Psoas muscle (tissue), 8 donors: ENCODE measurements at regions of chr7 and their contacts with region 1.

Region 1: GRCh38 chr7:10412422-10413019 is 561.2 kb upstream of the PHF14 start:
- DNase-seq: no peak
- ATAC-seq: no peak
- H3K4me3 ChIP-seq: no peak overlapping the region
- H3K27ac ChIP-seq: no peak overlapping the region
- H3K4me1 ChIP-seq: no peaks in the 10 kb centered on the region
- H3K27me3 ChIP-seq: no peaks in the 10 kb centered on the region
- CTCF ChIP-seq: peak; percentile 53

Region 2: GRCh38 chr7:8423057-8423456 is 1989.5 kb before region 1 on chr7:
- intact Hi-C with region 1: loop called in 1 of 2 experiments (anchors 10 kb)
- DNase-seq: no peak
- ATAC-seq: no peak
- H3K4me3 ChIP-seq: no peak overlapping the region
- H3K27ac ChIP-seq: no peak overlapping the region
- H3K4me1 ChIP-seq: no peaks in the 10 kb centered on the region
- H3K27me3 ChIP-seq: peaks cover 0 to 11% (median 0%) of the 10 kb centered on the region in 3 donors
- CTCF ChIP-seq: no peak

Region 3: DNA sequence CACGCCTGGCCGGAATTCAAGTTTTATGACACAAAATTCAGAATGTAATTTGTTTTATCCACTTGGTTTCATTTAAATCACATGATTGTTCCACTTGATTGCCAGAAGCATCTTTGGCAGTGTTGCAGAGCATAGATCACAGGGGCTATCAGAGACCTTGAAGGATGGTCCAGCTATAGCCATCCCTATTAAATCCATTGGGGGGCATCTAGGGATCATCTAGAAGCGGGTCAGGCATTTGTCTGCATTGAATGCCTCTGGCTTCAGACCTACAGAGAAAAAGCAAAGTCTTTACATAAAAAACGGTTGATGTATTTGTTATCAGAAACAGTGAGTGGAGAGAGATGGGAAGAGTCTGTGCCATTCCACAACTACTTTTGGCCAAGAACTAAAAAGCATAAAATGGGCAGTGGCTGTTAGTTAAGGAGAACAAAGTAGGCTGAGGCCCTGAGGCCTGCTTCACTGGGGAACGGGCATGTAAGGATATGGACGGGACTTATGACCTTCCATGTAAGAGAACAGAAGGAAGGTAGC is 1832.8 kb before region 1 on chr7:
- intact Hi-C with region 1: loop called in 1 of 2 experiments (anchors 5 kb)
- DNase-seq: no peak
- ATAC-seq: no peak
- H3K4me3 ChIP-seq: no peak overlapping the region
- H3K27ac ChIP-seq: no peak overlapping the region
- H3K4me1 ChIP-seq: no peaks in the 10 kb centered on the region
- H3K27me3 ChIP-seq: no peaks in the 10 kb centered on the region
- CTCF ChIP-seq: no peak

Region 4: DNA sequence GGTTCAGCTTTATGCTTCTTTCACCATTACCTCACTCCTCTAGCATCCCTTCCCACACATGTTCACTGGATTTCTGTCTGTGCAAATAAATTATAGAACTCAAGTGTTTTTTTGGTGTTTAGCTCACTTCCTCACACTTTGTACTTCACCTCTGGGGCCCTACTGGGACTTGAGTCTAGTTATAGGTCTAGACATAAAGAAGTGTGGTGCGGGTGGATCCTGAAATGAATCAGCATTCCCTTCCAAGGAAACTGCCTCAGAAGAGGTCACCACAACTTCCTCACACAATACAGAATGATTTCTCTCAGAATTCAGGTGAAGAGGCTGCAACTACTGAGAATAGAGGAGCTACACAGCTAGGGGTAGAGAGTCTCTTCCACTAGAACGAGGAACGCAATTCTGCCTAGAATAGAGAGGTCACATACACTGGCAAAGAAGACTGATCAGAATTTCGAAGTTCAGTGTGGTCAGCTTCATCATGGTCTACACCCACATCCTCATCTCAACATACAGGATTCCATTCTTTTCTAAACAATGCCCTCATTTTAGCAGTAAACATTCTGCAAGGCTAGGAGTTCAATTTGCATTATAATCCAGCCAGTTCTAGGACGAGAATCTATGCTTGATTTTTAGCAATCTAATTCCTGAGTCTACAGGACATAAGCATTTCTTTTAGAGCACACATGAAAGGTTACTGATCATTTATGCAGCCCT is 377.5 kb before region 1 on chr7:
- intact Hi-C with region 1: loop called in 1 of 2 experiments (anchors 10 kb)
- DNase-seq: no peak
- ATAC-seq: no peak
- H3K4me3 ChIP-seq: no peak overlapping the region
- H3K27ac ChIP-seq: no peak overlapping the region
- H3K4me1 ChIP-seq: no peaks in the 10 kb centered on the region
- H3K27me3 ChIP-seq: no peaks in the 10 kb centered on the region
- CTCF ChIP-seq: no peak